Activated CD8-positive, alpha-beta T cell treated with anti-CD3 and anti-CD28 coated beads, Interleukin-2, amount 10 ng/mL, durations not matched to agents 7 days and 5 days (primary cell): ENCODE measurements at regions of chr2 and their contacts with region 1.

Region 1: GRCh38 chr2:143205106-143205764 is 76.0 kb downstream of the ARHGAP15 start:
- DNase-seq: no peak
- ATAC-seq: peak; percentile 77
- H3K4me3 Mint-ChIP-seq: no peak overlapping the region
- H3K27ac Mint-ChIP-seq: peak overlapping the region; percentile 74
- H3K4me1 Mint-ChIP-seq: peaks cover 48% of the 10 kb centered on the region
- H3K27me3 Mint-ChIP-seq: no peaks in the 10 kb centered on the region

Region 2: DNA sequence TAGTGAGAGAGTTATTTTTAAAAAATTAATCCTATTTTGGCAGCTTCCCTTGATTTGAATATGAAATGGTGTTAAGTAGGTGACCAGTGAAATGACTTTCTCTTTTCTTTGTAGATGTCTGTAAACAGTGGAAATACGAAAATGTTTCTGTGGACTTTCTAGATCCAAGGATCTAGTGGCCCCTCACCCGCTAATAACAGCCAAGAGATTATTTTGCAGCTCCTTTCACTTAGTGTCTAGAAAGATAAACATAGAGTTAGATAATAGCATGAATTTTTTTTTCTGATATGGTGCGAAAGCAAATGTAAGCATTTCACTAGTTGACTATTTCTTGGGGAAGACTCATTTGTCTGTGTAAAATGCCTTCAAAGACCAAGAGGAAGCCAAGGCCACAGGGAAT is 18.4 kb before region 1 on chr2:
- CTCF ChIA-PET with region 1: interaction called, 11 read pairs
- POLR2A ChIA-PET with region 1: no interaction called
- DNase-seq: no peak
- ATAC-seq: no peak
- H3K4me3 Mint-ChIP-seq: no peak overlapping the region
- H3K27ac Mint-ChIP-seq: no peak overlapping the region
- H3K4me1 Mint-ChIP-seq: peaks cover 16% of the 10 kb centered on the region
- H3K27me3 Mint-ChIP-seq: no peaks in the 10 kb centered on the region